Dendritic cell treated with granulocyte-macrophage colony-stimulating factor and Interleukin-4, amounts not matched to agents 40 ng/mL and 50 ng/mL, for 4 days (primary cell): ENCODE measurements at regions of chr1 and their contacts with region 1.

Region 1: DNA sequence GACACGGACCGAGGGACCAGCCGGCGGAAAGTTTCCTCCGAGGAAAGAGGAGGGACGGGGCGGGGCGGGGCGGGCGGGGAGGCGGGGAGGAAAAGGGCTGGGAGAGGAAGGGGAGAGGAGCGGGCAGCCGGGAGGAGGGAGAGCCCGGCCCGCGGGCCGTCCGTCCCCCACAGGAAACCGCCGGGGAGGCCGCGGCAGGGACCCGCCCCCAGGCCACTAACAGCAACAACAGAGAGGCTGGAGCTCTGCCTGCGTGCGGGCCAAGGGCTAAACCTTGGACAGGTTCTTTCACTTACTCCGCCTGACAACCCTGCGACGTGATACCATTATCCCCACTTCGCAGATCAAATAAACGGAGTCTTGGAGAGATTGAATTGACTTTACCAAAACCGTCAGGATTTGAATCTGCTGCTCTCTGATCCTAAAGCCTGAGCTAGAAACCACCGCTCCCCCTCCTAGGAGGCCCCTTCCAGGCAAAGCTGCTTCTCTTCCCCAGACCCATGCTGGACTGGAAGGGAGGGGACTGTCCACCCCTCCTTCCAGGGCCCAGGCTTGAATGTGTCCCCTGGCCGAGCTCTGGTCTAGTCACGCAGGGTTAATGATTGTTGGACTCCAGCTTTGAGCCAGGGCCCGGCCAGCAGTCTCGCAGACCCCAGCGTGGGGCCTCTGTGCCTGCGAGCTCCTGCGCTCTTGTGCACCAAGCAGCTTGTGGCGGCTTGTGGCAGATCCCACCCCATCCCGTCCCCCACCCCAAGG is at the start of gene EVA1B:
- H3K4me3 Mint-ChIP-seq: peak within 1 kb of the TSS; percentile 72
- H3K27ac Mint-ChIP-seq: peak within 1 kb of the TSS; percentile 78
- H3K4me1 Mint-ChIP-seq: peaks cover 62% of the 10 kb centered on the region
- H3K27me3 Mint-ChIP-seq: peaks cover 40% of the 10 kb centered on the region

Region 2: DNA sequence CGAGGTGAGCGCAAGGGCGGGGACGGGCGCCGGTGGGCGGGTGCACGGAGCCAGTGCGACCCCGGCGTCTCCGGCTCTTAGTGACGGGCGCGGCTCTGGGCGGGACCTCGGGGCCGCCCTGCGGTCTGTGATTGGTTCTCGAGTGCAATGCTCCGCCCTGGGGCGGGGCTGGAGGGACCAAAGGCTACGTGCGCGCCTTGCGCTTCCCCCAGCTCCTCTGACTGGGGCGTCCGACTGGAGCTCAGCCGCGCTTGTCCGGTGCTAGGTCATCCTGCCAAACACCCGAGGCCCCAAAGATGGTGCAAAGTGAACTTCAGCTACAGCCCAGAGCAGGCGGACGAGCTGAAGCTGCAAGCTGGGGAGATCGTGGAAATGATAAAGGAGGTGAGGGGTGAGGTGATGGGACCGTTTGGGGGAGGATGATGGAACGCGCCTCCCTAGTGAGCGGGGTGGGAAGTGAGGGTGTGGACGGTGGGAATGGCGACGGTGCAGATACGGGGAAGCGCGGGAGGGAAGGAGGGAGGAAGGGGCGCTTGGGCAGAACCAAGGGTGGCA is 16.8 kb before region 1 on chr1:
- intact Hi-C with region 1: loop called (anchors 2 kb)
- H3K4me3 Mint-ChIP-seq: peak overlapping the region; percentile 92
- H3K27ac Mint-ChIP-seq: peak overlapping the region; percentile 41
- H3K4me1 Mint-ChIP-seq: peaks cover 52% of the 10 kb centered on the region
- H3K27me3 Mint-ChIP-seq: peaks cover 9% of the 10 kb centered on the region